Lower leg skin (tissue), 4 donors: ENCODE measurements at regions of chr17 and their contacts with region 1.

Region 1: GRCh38 chr17:38485146-38485468 is 56.8 kb downstream of the ARHGAP23 start:
- DNase-seq: no peak
- H3K4me3 ChIP-seq: no peak overlapping the region
- CTCF ChIP-seq: no peak
- POLR2A ChIP-seq: no peak

Region 2: GRCh38 chr17:38428112-38428642 is 56.9 kb before region 1 on chr17 and contains the start of gene ARHGAP23:
- intact Hi-C with region 1: loop called (anchors 10 kb)
- DNase-seq: no peak
- H3K4me3 ChIP-seq: peak within 1 kb of the TSS; percentile 65
- CTCF ChIP-seq: no peak
- POLR2A ChIP-seq: no peak
- total RNA-seq, gene ARHGAP23: 127 to 201 (median 149) TPM

Region 3: GRCh38 chr17:38444151-38444550 is 41.0 kb before region 1 on chr17:
- intact Hi-C with region 1: loop called (anchors 5 kb)
- DNase-seq: peak; percentile 58 to 92
- H3K4me3 ChIP-seq: no peak overlapping the region
- CTCF ChIP-seq: peak in 1 of 3 donors; percentile 71
- POLR2A ChIP-seq: no peak

Region 4: DNA sequence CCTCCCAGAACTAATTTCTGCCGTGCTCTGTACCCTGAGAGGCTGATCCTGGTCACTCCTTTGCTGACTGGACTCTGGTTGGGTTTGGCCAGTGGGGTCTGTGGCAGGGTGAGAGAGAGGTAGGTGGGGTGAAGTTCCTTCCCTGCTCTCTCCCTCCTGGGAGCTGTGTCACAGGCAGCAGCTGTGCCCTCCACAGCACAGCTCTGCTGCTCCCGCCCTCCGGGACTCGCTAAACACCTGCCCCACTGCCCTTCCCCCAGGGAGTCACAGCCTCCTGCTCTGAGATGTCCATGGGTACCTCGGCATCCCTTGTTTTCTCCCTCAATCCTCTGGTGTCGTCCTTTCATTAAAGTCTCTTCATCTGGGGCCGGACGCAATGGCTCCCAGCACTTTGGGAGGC is 54.3 kb after region 1 on chr17:
- intact Hi-C with region 1: no loop called
- DNase-seq: no peak
- H3K4me3 ChIP-seq: no peak overlapping the region
- CTCF ChIP-seq: no peak
- POLR2A ChIP-seq: no peak